A549 (cell line): ENCODE measurements at regions of chr10 and their contacts with region 1.

Region 1: DNA sequence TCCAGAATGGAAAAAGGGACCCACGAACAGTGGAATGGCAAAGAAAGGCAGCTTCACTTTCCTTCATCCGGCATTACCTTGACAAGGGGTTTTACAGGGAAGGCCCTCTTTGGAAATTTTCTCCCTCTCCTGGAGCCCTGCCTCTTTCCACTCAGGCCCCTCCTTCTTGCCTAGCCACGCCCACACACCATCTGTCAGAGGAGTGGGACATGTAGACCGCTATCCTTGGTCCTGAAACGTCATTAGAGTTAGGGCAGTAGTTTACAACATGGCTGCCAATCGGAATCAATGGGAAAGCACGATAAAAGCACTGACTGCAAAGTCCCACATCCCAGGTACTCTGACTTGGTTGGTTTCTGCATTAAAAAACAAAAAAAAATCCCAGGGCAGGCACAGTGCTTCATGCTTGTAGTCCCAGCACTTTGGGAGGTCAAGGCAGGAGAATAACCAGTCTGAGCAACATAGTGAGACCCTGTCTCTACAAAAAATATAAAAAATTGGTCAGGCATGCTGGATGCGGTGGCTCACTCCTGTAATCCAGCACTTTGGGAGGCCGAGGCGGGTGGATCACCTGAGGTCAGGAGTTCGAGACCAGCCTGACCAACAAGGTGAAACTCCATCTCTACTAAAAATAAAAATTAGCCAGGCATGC is 96.4 kb downstream of the MARCHF5 start:
- DNase-seq: peak; percentile 55 to 72
- ATAC-seq: peak; percentile 77 to 87; a peak in 5 of 6 replicates
- H3K4me3 ChIP-seq: no peak overlapping the region
- H3K27ac ChIP-seq: no peak overlapping the region
- H3K4me1 ChIP-seq: no peaks in the 10 kb centered on the region
- CTCF ChIP-seq: no peak
- EP300 ChIP-seq: no peak
- POLR2A ChIP-seq: no peak
- RAD21 ChIP-seq: no peak

Region 2: DNA sequence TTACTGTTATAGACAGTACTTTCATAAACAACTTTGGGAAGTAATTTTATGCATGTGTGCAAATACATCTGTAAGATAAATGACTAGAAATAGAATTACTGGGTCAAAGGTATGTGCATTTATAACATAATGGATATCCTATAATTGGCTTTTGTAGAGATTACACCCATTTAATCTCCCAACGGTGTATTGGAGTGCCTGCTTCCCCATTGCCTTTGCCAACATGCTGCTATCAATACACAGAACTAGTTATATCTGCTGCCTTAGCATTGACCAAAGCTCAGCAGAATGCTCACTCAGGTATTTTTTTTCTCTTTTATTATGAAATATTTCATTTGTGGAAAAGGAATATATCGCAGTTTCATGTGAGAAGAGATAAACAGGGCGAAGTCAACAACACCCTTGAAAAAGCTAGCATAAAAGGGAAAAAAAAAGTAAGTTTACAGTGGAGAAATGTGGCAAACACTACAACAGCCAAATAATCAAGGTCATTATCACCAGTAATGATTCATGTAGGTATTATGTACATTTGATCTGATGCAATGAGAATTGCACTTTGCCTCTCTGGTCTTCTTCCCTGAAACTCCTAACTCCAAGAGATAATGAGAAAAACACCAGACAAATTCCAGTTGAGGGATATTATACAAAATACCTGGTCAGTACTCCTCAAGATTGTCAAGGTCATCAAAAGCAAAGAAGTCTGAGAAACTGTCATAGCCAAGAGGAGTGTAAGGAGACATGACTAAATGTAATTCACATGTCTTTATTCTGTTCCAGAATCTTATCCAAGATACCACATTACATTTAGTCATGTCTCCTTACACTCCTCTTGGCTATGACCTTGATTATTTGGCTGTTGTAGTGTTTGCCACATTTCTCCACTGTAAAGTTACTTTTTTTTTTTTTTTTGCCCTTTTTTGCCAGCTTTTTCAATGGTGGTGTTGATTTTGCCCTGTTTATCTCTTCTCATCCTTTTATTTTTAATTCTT is 59.7 kb before region 1 on chr10:
- CTCF ChIA-PET with region 1: no interaction called
- POLR2A ChIA-PET with region 1: interaction called, 16 read pairs
- DNase-seq: no peak
- ATAC-seq: no peak
- H3K4me3 ChIP-seq: no peak overlapping the region
- H3K27ac ChIP-seq: peak overlapping the region in 1 of 2 experiments; percentile 35; a peak in 1 of 6 replicates
- H3K4me1 ChIP-seq: peaks cover 30% of the 10 kb centered on the region
- CTCF ChIP-seq: no peak
- EP300 ChIP-seq: no peak
- POLR2A ChIP-seq: no peak
- RAD21 ChIP-seq: no peak